Activated CD4-positive, alpha-beta memory T cell treated with anti-CD3 and anti-CD28 coated beads for 36 hours (primary cell): ENCODE measurements at regions of chr4 and their contacts with region 1.

Region 1: DNA sequence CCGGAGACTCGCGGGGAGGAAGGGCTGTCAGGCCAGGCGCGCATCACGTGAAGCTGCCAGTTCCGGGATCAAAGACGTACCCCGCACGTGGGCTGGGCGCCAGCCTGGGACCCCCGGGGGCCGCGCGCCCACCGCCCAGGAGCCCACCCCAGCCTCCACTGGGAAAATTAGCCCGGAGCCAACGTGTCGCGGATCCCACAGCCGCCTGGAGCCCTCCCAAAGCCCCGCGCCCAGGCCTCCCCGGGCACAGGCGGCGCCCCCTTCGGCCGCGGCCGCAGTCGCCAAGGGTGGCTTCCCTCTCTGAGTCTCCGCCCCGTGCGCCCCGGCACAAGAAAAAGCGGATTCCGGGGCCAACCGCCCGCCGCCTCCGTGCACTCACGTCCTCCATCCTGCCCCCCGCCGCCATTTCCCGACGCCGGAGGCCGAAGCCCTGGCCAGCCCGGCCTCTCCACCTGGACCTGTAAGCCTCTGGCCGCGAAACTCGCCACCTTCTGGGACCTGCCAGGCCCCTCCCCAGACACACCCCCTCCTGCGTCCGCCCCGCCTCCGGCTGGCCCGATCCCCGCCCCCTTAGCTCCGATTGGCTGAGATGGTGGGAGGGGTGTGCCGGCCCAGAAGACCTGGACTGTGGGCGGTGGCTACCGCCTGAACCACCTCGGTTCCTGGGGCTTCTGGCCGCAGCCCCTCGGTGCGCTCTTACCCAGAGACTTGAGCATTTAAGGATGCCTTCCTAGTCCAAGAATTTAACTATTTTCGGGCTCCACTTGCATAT is at the start of gene TMEM192:
- DNase-seq: peak; percentile 95
- H3K4me3 Mint-ChIP-seq: peak within 1 kb of the TSS; percentile 93
- H3K27ac Mint-ChIP-seq: peak within 1 kb of the TSS; percentile 89
- H3K4me1 Mint-ChIP-seq: peaks cover 14% of the 10 kb centered on the region
- H3K27me3 Mint-ChIP-seq: no peaks in the 10 kb centered on the region
- total RNA-seq, gene TMEM192: 8.8 to 9.0 TPM

Region 2: GRCh38 chr4:163494360-163495162 is 1618.0 kb before region 1 on chr4 and contains the start of gene TMA16:
- CTCF ChIA-PET with region 1: no interaction called
- POLR2A ChIA-PET with region 1: no interaction called
- intact Hi-C with region 1: loop called (anchors 10 kb)
- DNase-seq: peak; percentile 92
- H3K4me3 Mint-ChIP-seq: peak within 1 kb of the TSS; percentile 99
- H3K27ac Mint-ChIP-seq: peak within 1 kb of the TSS; percentile 100
- H3K4me1 Mint-ChIP-seq: peaks cover 27% of the 10 kb centered on the region
- H3K27me3 Mint-ChIP-seq: peaks cover 2% of the 10 kb centered on the region
- total RNA-seq, gene TMA16: 46.0 to 52.0 TPM

Region 3: GRCh38 chr4:164956766-164957643 is 155.5 kb before region 1 on chr4:
- CTCF ChIA-PET with region 1: no interaction called
- POLR2A ChIA-PET with region 1: no interaction called
- intact Hi-C with region 1: loop called (anchors 2 kb)
- DNase-seq: peak; percentile 87
- H3K4me3 Mint-ChIP-seq: peak overlapping the region; percentile 90
- H3K27ac Mint-ChIP-seq: no peak overlapping the region
- H3K4me1 Mint-ChIP-seq: peaks cover 14% of the 10 kb centered on the region
- H3K27me3 Mint-ChIP-seq: peaks cover 1% of the 10 kb centered on the region

Region 4: DNA sequence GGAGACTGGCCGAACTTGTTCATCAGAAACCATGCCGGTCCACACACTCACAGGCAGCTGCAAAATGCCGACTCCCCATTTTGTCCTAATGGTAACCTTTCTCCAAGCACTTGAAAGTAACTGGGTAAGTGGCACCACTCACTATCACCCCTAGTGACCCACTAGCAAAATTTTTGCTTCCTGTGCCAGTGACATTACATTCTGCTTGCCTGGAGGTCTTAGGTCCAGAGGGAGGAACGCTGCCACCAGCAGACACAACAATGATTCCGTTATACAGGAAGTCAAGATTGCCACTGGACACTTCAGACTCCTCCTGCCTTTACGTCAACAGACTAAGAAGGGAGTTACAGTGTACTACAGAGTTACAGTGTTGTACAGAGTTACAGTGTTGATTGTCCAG is 11.9 kb after region 1 on chr4:
- CTCF ChIA-PET with region 1: interaction called, 22 read pairs
- POLR2A ChIA-PET with region 1: no interaction called
- intact Hi-C with region 1: no loop called
- DNase-seq: no peak
- H3K4me3 Mint-ChIP-seq: no peak overlapping the region
- H3K27ac Mint-ChIP-seq: no peak overlapping the region
- H3K4me1 Mint-ChIP-seq: no peaks in the 10 kb centered on the region
- H3K27me3 Mint-ChIP-seq: peaks cover 8% of the 10 kb centered on the region

Region 5: DNA sequence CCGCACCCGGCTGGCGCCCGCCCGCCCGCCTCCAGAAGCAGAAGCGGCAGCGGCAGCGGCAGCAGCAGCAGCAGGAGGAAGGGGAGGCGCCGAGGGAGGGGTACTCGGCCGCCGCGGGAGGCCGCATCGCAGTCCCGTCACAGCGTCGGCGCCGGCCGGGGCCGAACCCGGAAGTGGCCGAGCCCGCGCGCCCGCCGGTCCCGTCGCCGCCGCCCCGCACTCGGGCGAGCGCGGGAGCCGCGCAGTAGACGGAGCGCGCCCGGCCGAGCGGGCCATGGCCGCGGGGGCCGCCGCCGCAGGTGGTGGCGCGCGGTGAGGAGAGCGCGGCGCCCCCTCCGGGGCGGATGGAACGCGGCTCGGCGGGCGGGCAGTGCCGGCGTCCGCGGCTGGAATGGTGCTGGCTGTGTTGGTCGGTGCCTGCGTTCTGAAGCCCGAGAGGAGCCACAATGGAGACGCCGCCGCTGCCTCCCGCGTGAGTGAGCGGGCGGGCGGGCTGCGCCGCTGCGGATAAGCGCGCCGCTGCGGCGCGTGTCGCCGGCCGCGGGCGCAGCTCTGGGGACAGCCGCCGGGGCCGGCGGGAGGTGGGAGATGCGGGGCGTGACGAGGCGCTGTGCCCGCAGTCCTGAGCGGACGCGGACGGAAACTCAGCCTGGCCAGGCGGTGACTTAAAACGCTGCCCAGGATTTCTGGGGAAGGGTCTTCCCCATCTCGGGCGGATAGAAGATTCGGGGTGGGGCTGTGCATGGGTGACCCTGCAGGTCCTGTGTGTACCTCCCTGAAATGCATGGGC is 95.1 kb after region 1 on chr4 and contains the start of gene KLHL2:
- CTCF ChIA-PET with region 1: interaction called, 7 read pairs
- POLR2A ChIA-PET with region 1: no interaction called
- intact Hi-C with region 1: loop called (anchors 2 kb)
- DNase-seq: peak; percentile 74
- H3K4me3 Mint-ChIP-seq: peak within 1 kb of the TSS; percentile 88
- H3K27ac Mint-ChIP-seq: peak within 1 kb of the TSS; percentile 86
- H3K4me1 Mint-ChIP-seq: peaks cover 65% of the 10 kb centered on the region
- H3K27me3 Mint-ChIP-seq: no peaks in the 10 kb centered on the region
- total RNA-seq, gene KLHL2: 25.0 to 26.0 TPM

Region 6: DNA sequence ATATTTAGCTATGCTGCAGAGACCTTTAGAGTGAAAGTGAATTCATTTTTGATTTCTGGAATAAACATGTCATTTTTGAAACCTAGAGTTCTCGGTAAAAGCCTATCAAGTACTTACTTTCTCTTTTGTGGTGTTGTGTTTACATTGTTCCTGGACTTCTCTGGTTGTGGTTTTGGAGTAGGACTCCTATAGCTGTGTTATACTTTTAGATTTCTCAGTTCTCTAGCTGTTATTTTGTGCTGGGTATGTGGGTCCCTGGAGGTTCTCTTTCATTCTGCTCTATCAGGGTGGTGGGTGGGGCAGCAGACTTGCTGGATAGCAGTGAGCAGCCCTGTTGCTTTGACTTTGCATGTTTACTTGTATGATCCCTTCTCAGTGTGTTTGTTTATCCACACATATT is 189.3 kb after region 1 on chr4:
- CTCF ChIA-PET with region 1: no interaction called
- POLR2A ChIA-PET with region 1: no interaction called
- intact Hi-C with region 1: no loop called
- DNase-seq: peak; percentile 15
- H3K4me3 Mint-ChIP-seq: peak overlapping the region; percentile 58
- H3K27ac Mint-ChIP-seq: peak overlapping the region; percentile 34
- H3K4me1 Mint-ChIP-seq: peaks cover 12% of the 10 kb centered on the region
- H3K27me3 Mint-ChIP-seq: no peaks in the 10 kb centered on the region

Region 7: GRCh38 chr4:165464813-165465381 is 352.3 kb after region 1 on chr4:
- CTCF ChIA-PET with region 1: interaction called, 9 read pairs
- POLR2A ChIA-PET with region 1: no interaction called
- intact Hi-C with region 1: loop called (anchors 1 kb)
- DNase-seq: no peak
- H3K4me3 Mint-ChIP-seq: no peak overlapping the region
- H3K27ac Mint-ChIP-seq: no peak overlapping the region
- H3K4me1 Mint-ChIP-seq: no peaks in the 10 kb centered on the region
- H3K27me3 Mint-ChIP-seq: peaks cover 3% of the 10 kb centered on the region